T-cell (primary cell): ENCODE measurements at regions of chr10 and their contacts with region 1.

Region 1: DNA sequence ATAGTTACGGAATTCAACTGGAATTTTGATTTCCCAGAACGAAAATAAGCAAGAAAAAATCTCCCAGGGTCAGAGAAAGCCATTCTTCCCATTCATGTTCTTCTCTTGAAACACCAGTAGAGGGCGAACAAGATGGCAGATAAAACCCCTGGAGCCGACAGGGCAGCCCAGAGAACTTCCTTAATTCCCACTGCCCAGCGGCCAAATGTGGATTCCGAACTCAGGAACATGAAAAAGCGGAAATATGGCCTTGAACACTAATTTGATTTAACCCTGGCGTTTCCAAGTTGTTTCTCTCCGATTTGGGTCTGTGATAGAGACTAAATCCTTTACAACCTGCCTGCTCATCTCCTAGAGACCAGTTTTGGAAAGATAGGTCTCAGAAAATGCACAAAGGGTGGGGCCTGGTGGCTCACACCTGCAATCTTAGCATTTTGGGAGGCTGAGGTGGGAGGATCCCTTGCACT is 100.7 kb upstream of the WAC start:
- DNase-seq: peak in 20 of 35 experiments; percentile 1 to 56 (median 5)
- ATAC-seq: peak in 3 of 4 experiments; percentile 44 to 58 (median 52)
- H3K4me3 ChIP-seq: peak overlapping the region in 1 of 2 donors; percentile 13
- H3K4me3 Mint-ChIP-seq: peak overlapping the region; percentile 26 to 55 (median 45)
- H3K27ac ChIP-seq: no peak overlapping the region
- H3K27ac Mint-ChIP-seq: no peak overlapping the region
- H3K4me1 ChIP-seq: peaks cover 0 to 4% of the 10 kb centered on the region in 2 experiments
- H3K4me1 Mint-ChIP-seq: peaks cover 6 to 8% (median 6%) of the 10 kb centered on the region in 3 donors
- H3K27me3 ChIP-seq: peaks cover 0 to 18% of the 10 kb centered on the region in 2 experiments
- H3K27me3 Mint-ChIP-seq: peaks cover 6% of the 10 kb centered on the region in 2 donors

Region 2: GRCh38 chr10:28217848-28218247 is 214.4 kb before region 1 on chr10:
- CTCF ChIA-PET with region 1: no interaction called
- POLR2A ChIA-PET with region 1: no interaction called
- DNase-seq: peak in 1 of 35 experiments; percentile 6
- ATAC-seq: peak; percentile 48 to 63 (median 54)
- H3K4me3 ChIP-seq: no peak overlapping the region
- H3K4me3 Mint-ChIP-seq: peak overlapping the region in 1 of 3 donors; percentile 7
- H3K27ac ChIP-seq: no peak overlapping the region
- H3K27ac Mint-ChIP-seq: peak overlapping the region in 1 of 2 donors; percentile 40
- H3K4me1 ChIP-seq: peaks cover 0 to 5% of the 10 kb centered on the region in 2 experiments
- H3K4me1 Mint-ChIP-seq: peaks cover 52 to 58% (median 57%) of the 10 kb centered on the region in 3 donors
- H3K27me3 ChIP-seq: no peaks in the 10 kb centered on the region
- H3K27me3 Mint-ChIP-seq: no peaks in the 10 kb centered on the region

Region 3: GRCh38 chr10:28355376-28355775 is 76.9 kb before region 1 on chr10:
- CTCF ChIA-PET with region 1: interaction called in 1 of 2 experiments, 10 read pairs
- POLR2A ChIA-PET with region 1: no interaction called
- DNase-seq: no peak
- ATAC-seq: no peak
- H3K4me3 ChIP-seq: no peak overlapping the region
- H3K4me3 Mint-ChIP-seq: no peak overlapping the region
- H3K27ac ChIP-seq: no peak overlapping the region
- H3K27ac Mint-ChIP-seq: no peak overlapping the region
- H3K4me1 ChIP-seq: no peaks in the 10 kb centered on the region
- H3K4me1 Mint-ChIP-seq: peaks cover 2 to 8% (median 3%) of the 10 kb centered on the region in 3 donors
- H3K27me3 ChIP-seq: no peaks in the 10 kb centered on the region
- H3K27me3 Mint-ChIP-seq: no peaks in the 10 kb centered on the region

Region 4: DNA sequence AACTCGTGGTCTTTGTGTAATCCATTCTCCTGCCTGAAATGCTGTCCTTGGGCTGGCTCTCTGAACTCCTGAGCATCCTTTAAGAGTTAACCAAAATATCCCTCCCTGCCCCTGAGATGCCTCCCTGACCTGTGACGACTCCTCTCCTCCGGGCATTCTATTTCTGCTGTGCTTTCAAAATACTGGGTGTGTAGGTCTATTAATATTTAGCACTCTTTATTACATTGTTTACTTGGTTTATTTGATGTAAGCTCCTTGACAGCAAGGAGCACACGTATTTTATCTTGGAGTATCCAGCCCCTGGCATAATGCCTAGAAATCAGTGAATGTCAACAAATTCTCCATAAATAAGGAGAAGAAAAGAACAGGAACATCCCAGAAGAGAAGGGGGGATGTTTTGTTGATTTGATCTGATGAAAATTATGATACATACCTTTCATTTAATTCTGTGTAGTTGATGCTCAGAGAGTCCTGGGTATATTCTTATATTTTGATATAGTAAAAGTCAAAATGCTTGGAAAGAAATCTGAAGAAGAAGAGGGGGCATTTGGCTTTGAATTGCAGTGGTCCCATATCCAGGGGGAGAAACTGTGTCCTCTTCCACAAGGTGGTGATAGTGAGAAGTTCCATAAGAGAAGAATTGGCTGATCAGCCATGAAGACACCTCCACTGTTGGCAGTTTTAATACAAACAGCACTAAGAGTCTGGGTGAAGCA is 21.7 kb before region 1 on chr10:
- CTCF ChIA-PET with region 1: interaction called in 1 of 2 experiments, 10 read pairs
- POLR2A ChIA-PET with region 1: no interaction called
- DNase-seq: no peak
- ATAC-seq: no peak
- H3K4me3 ChIP-seq: no peak overlapping the region
- H3K4me3 Mint-ChIP-seq: no peak overlapping the region
- H3K27ac ChIP-seq: no peak overlapping the region
- H3K27ac Mint-ChIP-seq: no peak overlapping the region
- H3K4me1 ChIP-seq: no peaks in the 10 kb centered on the region
- H3K4me1 Mint-ChIP-seq: peaks cover 0 to 5% (median 0%) of the 10 kb centered on the region in 3 donors
- H3K27me3 ChIP-seq: peaks cover 0 to 27% of the 10 kb centered on the region in 2 experiments
- H3K27me3 Mint-ChIP-seq: peaks cover 21 to 27% of the 10 kb centered on the region in 2 donors